PC-9 (cell line): ENCODE measurements at regions of chr5 and their contacts with region 1.

Region 1: GRCh38 chr5:66171349-66172344 is 27.5 kb downstream of the SREK1 start:
- DNase-seq: peak in 1 of 2 experiments; percentile 5
- H3K4me3 ChIP-seq: no peak overlapping the region
- H3K27ac ChIP-seq: no peak overlapping the region
- H3K4me1 ChIP-seq: no peaks in the 10 kb centered on the region
- H3K27me3 ChIP-seq: no peaks in the 10 kb centered on the region
- CTCF ChIP-seq: peak; percentile 72

Region 2: DNA sequence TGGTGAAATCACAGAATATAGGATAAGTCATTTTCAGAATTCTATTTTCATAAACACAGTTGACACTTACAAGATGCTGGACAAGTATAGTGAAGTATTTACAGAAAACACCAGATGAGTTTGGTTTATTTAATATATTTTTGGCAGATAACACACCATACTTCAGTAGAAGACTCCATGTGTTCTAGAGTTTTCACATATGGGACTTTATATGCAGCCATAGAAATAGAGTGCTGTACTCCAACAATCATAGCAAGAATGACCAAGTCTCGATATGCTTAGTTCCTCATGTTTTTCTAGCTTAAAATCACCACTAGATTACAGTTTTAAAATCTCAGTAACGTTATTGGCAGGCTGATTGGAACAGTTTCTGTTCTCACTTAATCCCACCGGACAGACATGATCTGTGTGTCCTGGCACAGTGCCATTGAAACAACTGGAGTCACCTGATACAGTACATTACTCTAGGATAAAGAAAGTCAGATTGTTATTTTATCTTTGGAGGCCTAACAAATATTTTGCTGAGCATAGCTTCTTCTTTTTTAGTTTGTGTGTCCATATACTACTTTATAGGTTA is 291.1 kb before region 1 on chr5:
- CTCF ChIA-PET with region 1: no interaction called
- POLR2A ChIA-PET with region 1: no interaction called
- intact Hi-C with region 1: no loop called
- DNase-seq: no peak
- H3K4me3 ChIP-seq: no peak overlapping the region
- H3K27ac ChIP-seq: no peak overlapping the region; the same call in 1 of the 2 replicates
- H3K4me1 ChIP-seq: peaks cover 20% of the 10 kb centered on the region
- H3K27me3 ChIP-seq: no peaks in the 10 kb centered on the region
- CTCF ChIP-seq: no peak

Region 3: DNA sequence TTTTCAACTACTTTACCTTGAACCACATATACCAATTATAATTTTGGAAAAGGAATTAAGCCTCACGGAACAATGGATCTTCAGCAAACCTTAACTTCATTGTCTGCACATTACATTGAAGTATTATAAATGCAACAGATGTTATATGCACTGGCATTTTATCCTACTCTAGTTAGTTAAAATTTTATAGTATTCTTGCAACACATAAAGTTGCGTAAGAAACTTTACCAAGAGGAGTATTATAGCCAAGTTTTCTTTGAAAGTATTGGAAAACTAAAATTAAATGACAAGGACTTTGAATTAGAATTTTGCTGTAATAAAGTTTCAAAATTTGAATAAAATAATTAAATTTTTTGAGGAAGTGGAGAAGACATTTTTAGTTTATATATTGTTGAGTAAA is 91.0 kb before region 1 on chr5:
- CTCF ChIA-PET with region 1: no interaction called
- POLR2A ChIA-PET with region 1: no interaction called
- intact Hi-C with region 1: no loop called
- DNase-seq: no peak
- H3K4me3 ChIP-seq: no peak overlapping the region
- H3K27ac ChIP-seq: no peak overlapping the region
- H3K4me1 ChIP-seq: no peaks in the 10 kb centered on the region
- H3K27me3 ChIP-seq: no peaks in the 10 kb centered on the region
- CTCF ChIP-seq: no peak

Region 4: DNA sequence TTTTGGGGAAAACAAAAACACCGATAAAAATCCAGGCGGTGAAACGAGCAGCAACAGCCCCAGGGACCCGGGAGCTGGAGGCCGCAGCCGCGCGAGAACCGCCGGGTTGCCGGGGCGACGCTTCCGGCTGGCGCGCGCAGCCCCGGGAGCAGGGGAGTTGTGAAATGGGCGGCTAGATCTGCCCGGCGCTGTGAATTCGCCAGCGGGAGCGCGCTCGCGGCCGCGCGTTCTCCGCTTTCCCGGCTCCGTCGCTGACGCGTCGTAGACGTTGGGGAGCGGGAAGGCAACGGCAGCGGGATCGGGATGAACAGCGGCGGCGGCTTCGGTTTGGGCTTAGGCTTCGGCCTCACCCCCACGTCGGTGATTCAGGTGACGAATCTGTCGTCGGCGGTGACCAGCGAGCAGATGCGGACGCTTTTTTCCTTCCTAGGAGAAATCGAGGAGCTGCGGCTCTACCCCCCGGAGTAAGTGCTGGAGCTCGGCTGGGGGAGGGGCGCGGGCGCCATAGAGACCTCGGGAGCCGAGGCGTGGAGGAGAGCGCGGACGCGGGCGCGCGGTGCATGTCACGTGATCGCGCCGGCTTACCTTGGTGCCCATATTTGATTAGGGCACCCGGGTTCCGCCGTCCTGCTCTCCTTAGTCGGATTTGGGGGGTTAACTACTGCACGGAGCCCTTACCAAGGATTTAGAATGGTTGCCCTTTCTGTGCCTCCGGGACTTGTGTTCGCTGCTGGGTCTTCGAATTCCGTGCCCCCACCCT is 27.4 kb before region 1 on chr5 and contains the start of gene SREK1:
- CTCF ChIA-PET with region 1: no interaction called
- POLR2A ChIA-PET with region 1: no interaction called
- intact Hi-C with region 1: no loop called
- DNase-seq: peak; percentile 82 to 92
- H3K4me3 ChIP-seq: peak within 1 kb of the TSS; percentile 97
- H3K27ac ChIP-seq: peak within 1 kb of the TSS; percentile 84
- H3K4me1 ChIP-seq: peaks cover 31% of the 10 kb centered on the region
- H3K27me3 ChIP-seq: no peaks in the 10 kb centered on the region
- CTCF ChIP-seq: no peak
- total RNA-seq, gene SREK1: 73.8 and 82.8 TPM in 2 replicates

Region 5: GRCh38 chr5:66209350-66209749 is 37.7 kb after region 1 on chr5:
- CTCF ChIA-PET with region 1: interaction called, 4 read pairs
- POLR2A ChIA-PET with region 1: no interaction called
- intact Hi-C with region 1: loop called (anchors 1 kb)
- DNase-seq: peak; percentile 98
- H3K4me3 ChIP-seq: peak overlapping the region; percentile 13; the same call in 1 of the 2 replicates
- H3K27ac ChIP-seq: peak overlapping the region; percentile 78
- H3K4me1 ChIP-seq: peaks cover 24% of the 10 kb centered on the region
- H3K27me3 ChIP-seq: no peaks in the 10 kb centered on the region
- CTCF ChIP-seq: peak; percentile 55

Region 6: DNA sequence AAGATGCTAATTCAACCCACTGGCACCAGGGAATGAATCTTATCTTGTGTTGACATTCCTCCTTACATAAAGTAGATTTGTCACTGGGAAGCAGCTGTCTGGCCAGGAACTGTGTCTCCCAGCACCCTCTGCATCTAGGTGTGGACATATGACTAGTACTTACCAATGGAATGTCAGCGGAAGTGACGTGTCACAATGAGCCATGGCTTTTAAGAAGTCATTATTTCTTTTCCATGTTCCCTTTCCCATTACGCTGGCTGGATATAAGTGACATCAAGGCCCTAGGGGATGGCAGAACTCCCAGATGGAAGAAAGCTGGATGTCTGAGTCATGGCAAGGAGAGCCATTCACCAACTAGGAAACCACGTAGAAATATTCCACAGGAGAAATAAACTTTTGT is 339.8 kb after region 1 on chr5:
- CTCF ChIA-PET with region 1: no interaction called
- POLR2A ChIA-PET with region 1: no interaction called
- intact Hi-C with region 1: no loop called
- DNase-seq: no peak
- H3K4me3 ChIP-seq: no peak overlapping the region
- H3K27ac ChIP-seq: no peak overlapping the region
- H3K4me1 ChIP-seq: no peaks in the 10 kb centered on the region
- H3K27me3 ChIP-seq: no peaks in the 10 kb centered on the region
- CTCF ChIP-seq: no peak

Region 7: GRCh38 chr5:66757188-66757833 is 585.7 kb after region 1 on chr5:
- CTCF ChIA-PET with region 1: no interaction called
- POLR2A ChIA-PET with region 1: no interaction called
- intact Hi-C with region 1: loop called (anchors 2 kb)
- DNase-seq: peak in 1 of 2 experiments; percentile 20
- H3K4me3 ChIP-seq: no peak overlapping the region
- H3K27ac ChIP-seq: no peak overlapping the region
- H3K4me1 ChIP-seq: no peaks in the 10 kb centered on the region
- H3K27me3 ChIP-seq: 0 out of 2 replicates have a peak, but pooled peaks cover 12% of the 10 kb centered on the region
- CTCF ChIP-seq: peak; percentile 67

Region 8: DNA sequence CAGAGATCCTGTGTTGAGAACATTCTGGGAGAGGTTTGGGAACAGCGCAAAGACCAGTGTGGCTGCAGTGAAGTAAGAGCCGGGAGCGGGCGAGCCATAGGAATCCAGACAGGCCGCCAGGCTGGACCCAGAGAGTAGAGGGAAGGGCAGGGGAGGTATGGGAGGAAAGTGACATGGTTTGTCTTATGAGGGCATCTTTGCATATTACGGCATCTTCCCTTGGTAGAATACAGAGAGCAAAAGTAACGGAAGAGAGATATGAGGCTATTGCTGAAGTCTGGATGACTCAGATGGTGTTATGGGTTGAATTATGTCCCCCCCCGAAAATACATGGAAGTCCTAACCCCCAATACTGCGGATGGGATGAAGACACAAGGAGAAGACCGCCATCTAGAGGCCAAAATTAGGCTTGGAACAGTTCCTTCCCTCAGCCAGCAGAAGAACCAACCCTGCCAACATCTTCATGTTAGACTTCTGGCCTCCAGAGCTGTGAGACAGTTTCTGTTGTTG is 692.7 kb after region 1 on chr5:
- CTCF ChIA-PET with region 1: no interaction called
- POLR2A ChIA-PET with region 1: no interaction called
- intact Hi-C with region 1: loop called (anchors 2 kb)
- DNase-seq: peak in 1 of 2 experiments; percentile 25
- H3K4me3 ChIP-seq: no peak overlapping the region
- H3K27ac ChIP-seq: no peak overlapping the region
- H3K4me1 ChIP-seq: peaks cover 19% of the 10 kb centered on the region
- H3K27me3 ChIP-seq: no peaks in the 10 kb centered on the region
- CTCF ChIP-seq: peak; percentile 80